Cardiac septum (tissue), 1 donor: ENCODE measurements at regions of chr21 and their contacts with region 1.

Region 1: GRCh38 chr21:32653311-32653901 is 41.2 kb upstream of the CFAP298 start:
- DNase-seq: no peak

Region 2: GRCh38 chr21:32826329-32827167 is 173.1 kb after region 1 on chr21:
- intact Hi-C with region 1: loop called (anchors 2 kb)
- DNase-seq: no peak